ENCODE measurements at regions of chr7 and their contacts with region 1.

Region 1: GRCh38 chr7:4361757-4362156 is 320.3 kb upstream of the FOXK1 start:
- DNase-seq: no peak

Region 2: DNA sequence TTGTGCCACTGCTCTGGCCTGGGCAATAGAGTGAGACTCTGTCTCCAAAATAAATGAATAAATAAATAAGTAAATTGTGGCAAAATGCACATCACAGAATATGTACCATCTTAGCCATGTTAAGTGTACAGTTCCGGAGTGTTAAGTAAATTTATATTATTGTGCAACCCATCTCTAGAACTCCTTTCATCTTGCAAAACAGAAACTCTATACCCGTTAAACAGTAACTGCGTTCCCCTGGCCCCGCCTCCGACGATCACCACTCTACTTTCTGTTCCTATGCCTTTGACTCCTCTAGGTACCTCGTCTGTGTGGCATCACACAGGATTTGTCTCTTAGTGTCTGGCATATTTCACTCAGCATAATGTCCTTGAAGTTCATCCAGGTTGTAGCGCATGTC is 36.0 kb before region 1 on chr7:
- intact Hi-C with region 1: loop called in 1 of 2 experiments (anchors 1 kb)
- DNase-seq: no peak

Measured in posterior vena cava (tissue), 2 donors.